ENCODE measurements at regions of chr19 and their contacts with region 1.

Region 1: DNA sequence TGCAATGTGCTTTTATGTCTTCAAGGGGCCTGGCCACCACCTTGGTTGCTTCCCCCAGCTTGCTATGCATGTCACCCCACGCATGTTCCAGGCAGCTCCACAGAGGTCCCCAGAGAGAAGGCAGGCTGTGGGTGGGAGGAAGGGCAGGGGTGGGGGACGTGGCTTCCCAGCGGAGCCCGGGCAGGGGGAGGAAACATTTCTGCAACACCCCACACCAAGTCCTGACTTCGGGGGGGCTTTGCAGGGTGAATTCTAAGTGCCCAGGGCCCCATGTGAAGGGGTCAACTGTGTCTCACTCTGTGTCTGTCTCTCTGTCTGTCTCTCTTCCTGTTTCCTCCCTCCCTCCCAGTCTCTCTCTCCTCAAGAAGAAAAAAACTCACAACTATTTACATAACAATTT is 39.6 kb downstream of the LTBP4 start:
- DNase-seq: no peak
- H3K4me3 Mint-ChIP-seq: no peak overlapping the region
- H3K27ac Mint-ChIP-seq: peak overlapping the region; percentile 41
- H3K4me1 Mint-ChIP-seq: peaks cover 10% of the 10 kb centered on the region
- H3K27me3 Mint-ChIP-seq: peaks cover under 1% of the 10 kb centered on the region

Region 2: DNA sequence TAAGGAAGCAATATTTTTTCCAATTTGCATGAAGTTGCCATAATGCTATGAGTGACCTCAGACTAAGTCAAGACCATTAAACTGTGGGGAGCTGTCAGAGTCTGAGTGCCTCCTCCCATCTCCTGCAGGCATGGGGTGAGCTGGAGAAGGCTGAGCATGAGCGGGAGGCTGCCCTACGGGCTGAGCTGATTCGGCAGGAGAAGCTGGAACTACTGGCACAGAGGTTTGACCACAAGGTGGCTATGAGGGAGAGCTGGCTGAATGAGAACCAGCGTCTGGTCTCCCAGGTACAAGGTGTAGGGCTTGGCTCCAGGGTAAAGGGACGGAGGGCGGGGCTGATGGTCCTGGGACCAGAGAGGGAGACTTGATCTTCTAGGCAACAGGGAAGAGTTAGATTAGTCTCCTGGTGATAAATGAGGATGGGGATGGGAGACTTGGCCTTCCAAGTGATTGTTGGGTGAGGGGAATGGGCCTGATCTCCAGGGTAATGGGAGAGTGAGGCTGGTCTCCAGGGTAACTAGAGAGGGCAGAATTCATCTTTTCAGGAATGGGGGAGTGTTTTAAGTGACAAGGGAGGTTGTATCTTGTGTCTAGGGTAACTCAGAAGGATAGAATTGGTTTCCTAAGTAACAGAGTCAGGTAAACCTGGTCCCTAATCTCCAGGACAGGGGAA is 138.0 kb before region 1 on chr19:
- CTCF ChIA-PET with region 1: no interaction called
- POLR2A ChIA-PET with region 1: no interaction called
- DNase-seq: no peak
- H3K4me3 Mint-ChIP-seq: no peak overlapping the region
- H3K27ac Mint-ChIP-seq: no peak overlapping the region
- H3K4me1 Mint-ChIP-seq: no peaks in the 10 kb centered on the region
- H3K27me3 Mint-ChIP-seq: peaks cover 2% of the 10 kb centered on the region

Region 3: GRCh38 chr19:40561947-40562346 is 78.8 kb before region 1 on chr19:
- CTCF ChIA-PET with region 1: no interaction called
- POLR2A ChIA-PET with region 1: no interaction called
- DNase-seq: no peak
- H3K4me3 Mint-ChIP-seq: no peak overlapping the region
- H3K27ac Mint-ChIP-seq: no peak overlapping the region
- H3K4me1 Mint-ChIP-seq: peaks cover 3% of the 10 kb centered on the region
- H3K27me3 Mint-ChIP-seq: peaks cover 27% of the 10 kb centered on the region

Region 4: GRCh38 chr19:40613640-40614303 is 27.0 kb before region 1 on chr19:
- CTCF ChIA-PET with region 1: interaction called, 10 read pairs
- POLR2A ChIA-PET with region 1: no interaction called
- DNase-seq: peak; percentile 88
- H3K4me3 Mint-ChIP-seq: peak overlapping the region; percentile 91
- H3K27ac Mint-ChIP-seq: peak overlapping the region; percentile 93
- H3K4me1 Mint-ChIP-seq: peaks cover 64% of the 10 kb centered on the region
- H3K27me3 Mint-ChIP-seq: no peaks in the 10 kb centered on the region

Region 5: DNA sequence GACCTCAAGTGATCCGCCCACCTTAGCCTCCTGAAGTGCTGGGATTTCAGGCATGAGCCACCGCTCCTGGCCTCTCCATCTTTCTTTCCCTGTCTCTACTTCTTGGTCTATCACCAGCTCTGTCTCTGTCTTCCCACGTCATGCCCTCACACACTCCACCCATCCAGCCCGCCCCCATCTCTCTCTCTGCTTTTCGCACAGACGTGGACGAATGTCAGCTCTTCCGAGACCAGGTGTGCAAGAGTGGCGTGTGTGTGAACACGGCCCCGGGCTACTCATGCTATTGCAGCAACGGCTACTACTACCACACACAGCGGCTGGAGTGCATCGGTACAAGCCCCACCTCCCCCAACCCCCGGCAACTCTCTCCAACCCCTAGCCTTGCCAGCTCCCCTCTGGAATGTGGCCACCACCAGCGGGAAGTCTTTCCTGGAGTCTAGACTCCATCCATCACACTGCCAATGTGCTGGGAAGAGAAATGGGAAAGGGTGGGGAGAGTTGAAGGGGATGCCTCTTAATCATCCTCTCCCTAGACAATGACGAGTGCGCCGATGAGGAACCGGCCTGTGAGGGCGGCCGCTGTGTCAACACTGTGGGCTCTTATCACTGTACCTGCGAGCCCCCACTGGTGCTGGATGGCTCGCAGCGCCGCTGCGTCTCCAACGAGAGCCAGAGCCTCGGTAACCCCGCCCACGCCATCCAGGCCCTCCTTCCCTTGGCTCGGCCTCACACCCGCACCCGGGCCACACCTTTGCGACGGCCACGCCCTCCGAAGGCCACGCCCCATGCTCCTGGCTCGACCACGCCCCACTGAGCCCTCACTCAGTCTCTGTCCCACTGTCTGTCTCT is 17.1 kb before region 1 on chr19:
- CTCF ChIA-PET with region 1: interaction called, 13 read pairs
- POLR2A ChIA-PET with region 1: interaction called, 3 read pairs
- DNase-seq: no peak
- H3K4me3 Mint-ChIP-seq: no peak overlapping the region
- H3K27ac Mint-ChIP-seq: no peak overlapping the region
- H3K4me1 Mint-ChIP-seq: peaks cover 19% of the 10 kb centered on the region
- H3K27me3 Mint-ChIP-seq: no peaks in the 10 kb centered on the region

Region 6: DNA sequence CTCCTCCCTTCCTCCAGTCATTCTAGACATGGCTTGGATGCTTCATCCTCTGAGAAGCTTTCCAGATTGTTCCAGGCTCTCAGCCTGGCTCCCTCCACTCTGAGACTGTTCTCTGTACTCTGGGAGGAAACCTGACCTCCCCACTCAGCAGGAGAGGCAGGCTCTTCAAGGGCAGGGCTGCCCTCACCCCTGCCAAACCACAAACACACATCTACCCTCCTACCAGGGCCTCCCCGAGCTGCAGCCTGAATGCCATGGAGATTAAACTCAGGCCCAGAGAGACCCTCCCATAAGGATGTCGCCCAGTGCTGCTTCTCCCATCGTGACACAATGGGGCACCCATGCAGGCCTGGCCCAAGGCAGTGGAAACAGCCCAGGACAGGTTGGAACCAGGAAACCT is 33.5 kb after region 1 on chr19:
- CTCF ChIA-PET with region 1: no interaction called
- POLR2A ChIA-PET with region 1: no interaction called
- DNase-seq: no peak
- H3K4me3 Mint-ChIP-seq: peak overlapping the region; percentile 9
- H3K27ac Mint-ChIP-seq: no peak overlapping the region
- H3K4me1 Mint-ChIP-seq: peaks cover 1% of the 10 kb centered on the region
- H3K27me3 Mint-ChIP-seq: no peaks in the 10 kb centered on the region

Measured in activated CD4-positive, alpha-beta T cell treated with anti-CD3 and anti-CD28 coated beads, Interleukin-2, amount 10 ng/mL, durations not matched to agents 7 days and 5 days (primary cell).